Left lung (tissue), 14 donors: ENCODE measurements at regions of chr15 and their contacts with region 1.

Region 1: GRCh38 chr15:25070357-25070963 is 115.7 kb downstream of the SNRPN start:
- DNase-seq: no peak
- ATAC-seq: no peak
- H3K4me3 ChIP-seq: no peak overlapping the region
- H3K27ac ChIP-seq: no peak overlapping the region
- H3K4me1 ChIP-seq: no peaks in the 10 kb centered on the region
- H3K27me3 ChIP-seq: no peaks in the 10 kb centered on the region
- CTCF ChIP-seq: no peak

Region 2: GRCh38 chr15:24898715-24899272 is 171.7 kb before region 1 on chr15:
- intact Hi-C with region 1: no loop called
- DNase-seq: no peak
- ATAC-seq: no peak
- H3K4me3 ChIP-seq: no peak overlapping the region
- H3K27ac ChIP-seq: no peak overlapping the region
- H3K4me1 ChIP-seq: no peaks in the 10 kb centered on the region
- H3K27me3 ChIP-seq: no peaks in the 10 kb centered on the region
- CTCF ChIP-seq: no peak

Region 3: GRCh38 chr15:25019434-25019833 is 51.0 kb before region 1 on chr15:
- intact Hi-C with region 1: loop called in 1 of 2 experiments (anchors 10 kb)
- DNase-seq: no peak
- ATAC-seq: no peak
- H3K4me3 ChIP-seq: no peak overlapping the region
- H3K27ac ChIP-seq: no peak overlapping the region
- H3K4me1 ChIP-seq: no peaks in the 10 kb centered on the region
- H3K27me3 ChIP-seq: no peaks in the 10 kb centered on the region
- CTCF ChIP-seq: no peak

Region 4: DNA sequence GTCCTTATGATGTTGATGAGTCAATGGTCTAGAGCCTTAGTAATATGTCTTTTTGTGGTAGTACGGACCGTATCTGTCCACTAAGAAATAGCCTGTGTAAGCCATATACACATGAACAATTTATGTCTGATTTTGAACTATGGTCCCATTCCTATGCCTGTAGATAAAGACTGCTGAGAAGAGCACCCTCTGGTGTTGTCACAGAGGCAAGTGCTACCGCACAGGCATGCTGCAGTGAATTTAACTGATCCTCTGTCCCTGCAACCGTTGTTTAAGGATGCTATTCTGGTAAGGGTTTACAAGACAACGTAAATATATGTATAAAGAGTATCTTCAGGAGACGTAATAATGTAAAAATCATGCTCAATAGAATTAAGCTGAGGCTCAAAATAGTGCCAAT is 197.7 kb after region 1 on chr15:
- intact Hi-C with region 1: no loop called
- DNase-seq: no peak
- ATAC-seq: no peak
- H3K4me3 ChIP-seq: no peak overlapping the region
- H3K27ac ChIP-seq: no peak overlapping the region
- H3K4me1 ChIP-seq: no peaks in the 10 kb centered on the region
- H3K27me3 ChIP-seq: no peaks in the 10 kb centered on the region
- CTCF ChIP-seq: no peak